ENCODE measurements at regions of chr16 and their contacts with region 1.

Region 1: GRCh38 chr16:46801428-46802049 is 29.4 kb downstream of the C16orf87 start:
- DNase-seq: peak; percentile 57
- ATAC-seq: 0 out of 2 replicates have a peak, but pooled peaks have one; percentile 29
- H3K4me3 ChIP-seq: no peak overlapping the region
- H3K27ac ChIP-seq: no peak overlapping the region
- H3K4me1 ChIP-seq: no peaks in the 10 kb centered on the region
- H3K27me3 ChIP-seq: no peaks in the 10 kb centered on the region
- CTCF ChIP-seq: peak; percentile 63

Region 2: DNA sequence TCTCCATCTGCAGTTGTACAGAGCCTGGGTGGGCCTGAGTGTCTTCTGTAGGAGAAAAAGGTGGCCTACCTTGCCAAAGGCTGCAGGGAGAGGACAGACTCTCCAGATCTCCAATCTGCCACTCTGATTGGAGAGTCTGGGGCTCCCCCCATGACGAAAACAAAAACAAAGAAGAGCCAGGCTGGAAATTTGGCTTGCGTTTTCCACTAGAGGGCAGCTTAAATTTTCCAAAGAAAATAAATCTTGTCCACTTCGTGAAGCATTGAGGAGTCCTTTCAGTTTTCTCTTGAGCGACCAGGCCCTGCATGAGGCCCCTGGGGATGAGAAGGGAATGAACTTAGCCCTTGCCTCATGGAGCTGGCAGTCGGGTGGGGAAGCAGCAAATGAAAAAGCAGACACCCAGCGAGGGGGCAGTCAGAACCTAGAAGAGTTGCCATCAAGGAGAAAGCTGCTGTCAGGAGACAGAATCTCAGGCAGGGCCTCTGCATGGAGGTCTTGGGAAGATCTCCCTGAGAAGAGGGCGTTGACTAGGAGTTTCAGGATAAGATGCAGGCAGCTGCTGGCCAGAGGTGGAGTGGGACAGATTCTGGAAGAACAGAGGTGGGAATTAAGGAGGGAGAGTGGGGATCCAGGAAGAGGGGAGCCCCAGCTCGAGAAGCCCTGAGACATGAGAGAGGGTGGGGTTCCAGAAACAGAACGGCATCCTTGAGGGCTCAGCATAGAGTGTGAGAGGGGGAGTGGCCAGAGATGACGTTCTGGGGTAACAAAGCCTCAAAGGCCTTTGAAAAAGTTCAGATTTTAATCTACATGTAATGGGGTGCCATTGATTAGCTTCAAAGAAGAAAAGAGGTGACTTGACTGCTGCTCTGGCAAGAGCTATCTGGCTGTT is 172.0 kb before region 1 on chr16:
- CTCF ChIA-PET with region 1: no interaction called
- POLR2A ChIA-PET with region 1: no interaction called
- intact Hi-C with region 1: loop called (anchors 2 kb)
- DNase-seq: peak; percentile 74
- ATAC-seq: peak; percentile 77
- H3K4me3 ChIP-seq: peak overlapping the region; percentile 35; the same call in 1 of the 2 replicates
- H3K27ac ChIP-seq: no peak overlapping the region
- H3K4me1 ChIP-seq: no peaks in the 10 kb centered on the region
- H3K27me3 ChIP-seq: no peaks in the 10 kb centered on the region
- CTCF ChIP-seq: peak; percentile 63

Region 3: DNA sequence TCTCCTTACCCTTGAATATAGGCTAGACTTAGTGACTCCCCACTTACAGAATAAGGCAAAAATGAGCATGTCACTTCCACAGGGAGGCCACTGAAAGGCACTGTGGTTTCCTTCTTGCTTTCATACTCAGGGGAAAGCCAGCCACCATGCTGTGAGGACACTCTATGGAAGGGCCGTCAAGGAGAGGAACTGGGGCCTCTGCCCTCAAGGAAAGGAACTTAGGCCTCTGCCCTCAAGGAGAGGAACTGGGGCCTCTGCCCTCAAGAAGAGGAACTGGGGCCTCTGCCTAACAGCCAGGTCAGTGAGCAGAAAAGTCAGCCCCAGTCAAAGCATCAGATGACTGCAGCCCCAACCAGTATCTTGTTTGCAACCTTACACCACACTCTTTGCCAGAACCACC is 142.6 kb before region 1 on chr16:
- CTCF ChIA-PET with region 1: no interaction called
- POLR2A ChIA-PET with region 1: no interaction called
- intact Hi-C with region 1: no loop called
- DNase-seq: no peak
- ATAC-seq: no peak
- H3K4me3 ChIP-seq: no peak overlapping the region
- H3K27ac ChIP-seq: no peak overlapping the region
- H3K4me1 ChIP-seq: no peaks in the 10 kb centered on the region
- H3K27me3 ChIP-seq: no peaks in the 10 kb centered on the region
- CTCF ChIP-seq: no peak

Region 4: DNA sequence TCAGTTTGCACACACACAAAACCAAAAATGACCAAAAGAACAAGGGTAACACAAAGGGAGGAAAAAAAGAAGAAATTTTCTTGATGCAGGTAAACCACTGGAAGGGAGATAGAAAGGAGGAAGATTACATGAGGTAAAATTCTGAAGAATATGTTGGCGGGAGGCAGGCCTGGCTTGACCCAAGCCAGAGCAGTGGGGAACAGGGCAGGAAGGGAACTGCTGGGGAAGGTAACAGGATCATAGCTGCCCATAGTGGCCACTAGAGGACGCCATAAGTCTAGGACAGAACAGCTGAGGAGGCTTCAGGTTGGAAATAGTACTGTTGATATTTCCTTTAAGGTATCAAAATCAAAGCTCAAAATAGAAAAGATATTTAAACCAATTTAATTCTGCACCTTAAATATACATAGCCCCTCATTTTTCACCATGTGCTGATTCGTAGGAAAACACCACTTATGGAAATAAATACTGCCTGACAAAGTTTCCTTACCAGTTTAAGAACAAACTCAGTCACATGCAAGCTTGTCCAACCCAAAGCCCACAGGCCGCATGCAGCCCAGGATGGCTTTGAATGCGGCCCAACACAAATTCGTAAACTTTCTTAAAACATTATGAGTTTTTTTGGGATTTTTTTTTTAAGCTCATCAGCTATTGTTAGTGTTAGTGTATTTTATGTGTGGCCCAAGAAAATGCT is 128.1 kb before region 1 on chr16:
- CTCF ChIA-PET with region 1: interaction called, 6 read pairs
- POLR2A ChIA-PET with region 1: no interaction called
- intact Hi-C with region 1: loop called (anchors 1 kb)
- DNase-seq: peak; percentile 60
- ATAC-seq: peak; percentile 85
- H3K4me3 ChIP-seq: no peak overlapping the region
- H3K27ac ChIP-seq: no peak overlapping the region
- H3K4me1 ChIP-seq: no peaks in the 10 kb centered on the region
- H3K27me3 ChIP-seq: no peaks in the 10 kb centered on the region
- CTCF ChIP-seq: peak; percentile 79

Region 5: DNA sequence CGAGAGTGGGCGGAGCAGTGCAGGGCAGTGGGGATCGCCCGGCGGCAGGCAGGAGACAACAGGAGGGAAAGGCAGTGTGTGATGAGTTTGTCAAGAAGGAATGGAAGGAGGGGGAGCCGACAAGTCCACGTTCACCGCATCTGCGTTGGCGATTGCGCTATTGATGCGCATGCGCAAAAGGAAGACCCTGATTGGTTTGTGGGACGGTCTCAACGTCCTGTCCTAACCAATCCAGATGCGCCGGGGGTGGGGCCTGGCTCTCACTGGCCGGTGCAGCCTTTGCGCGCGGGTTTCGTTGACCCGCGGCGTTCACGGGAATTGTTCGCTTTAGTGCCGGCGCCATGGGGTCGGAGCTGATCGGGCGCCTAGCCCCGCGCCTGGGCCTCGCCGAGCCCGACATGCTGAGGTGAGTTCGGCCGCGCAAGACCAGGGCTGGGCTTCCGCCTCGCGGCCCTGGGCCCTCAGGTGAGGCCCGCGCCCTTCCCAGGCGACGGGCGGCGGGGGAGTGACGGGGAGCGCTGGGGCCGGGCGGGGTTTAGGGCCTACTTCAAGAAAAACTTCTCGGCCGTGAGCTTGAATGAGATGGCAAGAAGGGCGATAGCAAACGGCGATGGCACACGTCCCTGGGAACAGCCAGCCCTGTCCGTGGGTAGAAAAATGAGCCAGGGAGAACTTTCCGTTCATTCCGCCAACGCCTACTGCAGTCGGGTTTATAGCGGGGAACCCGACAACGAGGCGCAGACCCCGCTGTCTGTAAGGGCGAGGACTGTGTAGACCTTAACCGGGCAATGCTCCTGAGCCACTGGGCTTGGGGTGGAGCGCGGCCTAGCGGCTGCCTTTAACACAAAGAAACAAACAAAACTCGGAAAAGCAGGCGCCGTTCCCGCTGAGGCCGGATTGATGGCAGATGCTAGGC is 111.9 kb before region 1 on chr16 and contains the start of gene ORC6:
- CTCF ChIA-PET with region 1: no interaction called
- POLR2A ChIA-PET with region 1: no interaction called
- intact Hi-C with region 1: loop called (anchors 5 kb)
- DNase-seq: peak; percentile 87
- ATAC-seq: peak; percentile 80
- H3K4me3 ChIP-seq: peak within 1 kb of the TSS; percentile 95
- H3K27ac ChIP-seq: peak within 1 kb of the TSS; percentile 71
- H3K4me1 ChIP-seq: peaks cover 23% of the 10 kb centered on the region
- H3K27me3 ChIP-seq: no peaks in the 10 kb centered on the region
- CTCF ChIP-seq: peak; percentile 50
- total RNA-seq, gene ORC6: 27.7 and 29.9 TPM in 2 replicates

Region 6: GRCh38 chr16:46709469-46710005 is 92.0 kb before region 1 on chr16:
- CTCF ChIA-PET with region 1: interaction called, 10 read pairs
- POLR2A ChIA-PET with region 1: no interaction called
- intact Hi-C with region 1: no loop called
- DNase-seq: no peak
- ATAC-seq: no peak
- H3K4me3 ChIP-seq: no peak overlapping the region
- H3K27ac ChIP-seq: no peak overlapping the region
- H3K4me1 ChIP-seq: no peaks in the 10 kb centered on the region
- H3K27me3 ChIP-seq: no peaks in the 10 kb centered on the region
- CTCF ChIP-seq: no peak